Common myeloid progenitor, CD34-positive (primary cell): ENCODE measurements at regions of chr2 and their contacts with region 1.

Region 1: DNA sequence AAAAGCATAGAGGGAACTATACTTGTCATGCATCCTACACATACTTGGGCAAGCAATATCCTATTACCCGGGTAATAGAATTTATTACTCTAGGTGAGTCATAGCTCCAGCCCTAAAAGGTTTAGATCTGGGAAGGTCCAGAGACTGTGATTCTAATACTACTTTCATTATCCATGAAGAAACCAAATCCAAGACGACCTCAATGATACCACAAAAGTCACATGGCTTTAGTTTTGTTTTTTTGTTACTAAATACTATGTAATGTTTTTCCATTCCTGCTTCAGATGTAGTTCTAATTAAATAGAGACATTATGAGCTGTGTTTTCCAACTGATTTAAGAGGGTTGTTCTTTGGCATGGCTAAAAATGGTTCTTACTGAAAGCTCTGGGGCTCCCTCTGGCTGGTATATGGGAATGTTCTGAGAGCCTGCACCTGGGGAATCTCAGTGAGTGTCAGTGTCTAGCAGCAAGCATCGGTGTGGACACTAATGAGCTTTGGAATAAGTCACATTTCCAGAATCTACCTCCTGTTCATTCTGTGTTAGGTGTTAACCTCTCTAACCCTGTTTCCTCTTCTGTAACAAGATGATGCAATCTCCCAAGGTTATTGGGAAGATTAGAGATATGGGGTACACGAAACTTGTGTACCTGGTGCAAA is 20.5 kb upstream of the IL1RL2 start:
- DNase-seq: peak; percentile 29 to 57 (median 52)
- H3K4me3 ChIP-seq: no peak overlapping the region
- H3K27ac ChIP-seq: no peak overlapping the region
- H3K4me1 ChIP-seq: no peaks in the 10 kb centered on the region
- H3K27me3 ChIP-seq: no peaks in the 10 kb centered on the region

Region 2: GRCh38 chr2:102005989-102006885 is 160.1 kb before region 1 on chr2:
- CTCF ChIA-PET with region 1: interaction called, 18 read pairs
- POLR2A ChIA-PET with region 1: no interaction called
- DNase-seq: peak; percentile 68 to 84 (median 76)
- H3K4me3 ChIP-seq: no peak overlapping the region
- H3K27ac ChIP-seq: no peak overlapping the region
- H3K4me1 ChIP-seq: peaks cover 0 to 17% (median 10%) of the 10 kb centered on the region in 4 experiments
- H3K27me3 ChIP-seq: no peaks in the 10 kb centered on the region

Region 3: DNA sequence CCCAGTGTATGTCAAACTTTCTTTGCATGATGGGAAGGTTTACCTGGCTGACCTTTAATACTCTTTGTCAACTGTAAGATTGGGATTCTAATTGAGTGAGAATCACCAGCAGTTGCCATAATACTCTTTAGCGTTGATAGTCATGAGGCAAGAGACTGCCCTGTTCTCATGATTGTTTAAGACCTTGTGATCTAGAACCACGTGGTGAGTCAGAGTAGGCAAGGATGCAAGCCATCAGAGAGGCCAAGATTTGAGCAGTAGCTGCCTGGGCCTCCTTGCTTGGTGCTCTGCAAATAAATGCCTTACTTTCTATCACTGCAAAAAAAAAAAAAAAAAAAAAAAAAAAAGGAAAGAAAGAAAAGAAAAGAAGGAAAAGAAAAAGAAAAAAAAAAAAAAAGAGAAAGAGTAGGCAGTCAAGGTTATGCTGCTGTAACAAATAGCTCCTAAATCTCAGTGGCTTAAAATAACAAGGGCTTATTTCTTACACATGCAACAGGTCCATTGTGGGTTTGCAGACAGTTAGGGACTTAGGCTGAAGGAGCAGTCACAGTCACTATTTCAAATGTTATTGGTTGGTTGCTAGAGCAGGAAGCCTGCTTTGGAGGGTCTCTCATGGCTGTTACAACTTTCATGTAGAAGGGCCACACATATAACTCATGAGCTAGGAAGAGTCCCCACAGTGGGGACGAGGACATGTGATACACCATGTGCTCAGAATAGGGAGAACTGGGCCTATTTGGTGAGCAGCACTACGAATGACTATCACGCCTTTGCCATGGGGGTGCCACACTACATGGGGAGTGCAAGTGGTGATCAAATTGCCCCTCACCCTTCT is 152.9 kb before region 1 on chr2:
- CTCF ChIA-PET with region 1: interaction called, 10 read pairs
- POLR2A ChIA-PET with region 1: no interaction called
- DNase-seq: peak in 1 of 3 donors; percentile 33
- H3K4me3 ChIP-seq: no peak overlapping the region
- H3K27ac ChIP-seq: no peak overlapping the region
- H3K4me1 ChIP-seq: peaks cover 0 to 15% (median 11%) of the 10 kb centered on the region in 4 experiments
- H3K27me3 ChIP-seq: no peaks in the 10 kb centered on the region

Region 4: GRCh38 chr2:102020596-102021181 is 145.6 kb before region 1 on chr2:
- CTCF ChIA-PET with region 1: interaction called, 40 read pairs
- POLR2A ChIA-PET with region 1: no interaction called
- DNase-seq: peak; percentile 74 to 84 (median 80)
- H3K4me3 ChIP-seq: no peak overlapping the region
- H3K27ac ChIP-seq: no peak overlapping the region
- H3K4me1 ChIP-seq: peaks cover 0 to 4% (median 1%) of the 10 kb centered on the region in 4 experiments
- H3K27me3 ChIP-seq: no peaks in the 10 kb centered on the region

Region 5: GRCh38 chr2:102141970-102142828 is 24.1 kb before region 1 on chr2 and contains the start of gene IL1R1:
- CTCF ChIA-PET with region 1: interaction called, 10 read pairs
- POLR2A ChIA-PET with region 1: no interaction called
- DNase-seq: peak in 2 of 3 donors; percentile 12 to 26
- H3K4me3 ChIP-seq: peak within 1 kb of the TSS; percentile 22 to 69 (median 55)
- H3K27ac ChIP-seq: no peak within 1 kb of the TSS
- H3K4me1 ChIP-seq: peaks cover 13 to 49% (median 33%) of the 10 kb centered on the region in 4 experiments
- H3K27me3 ChIP-seq: peaks cover 0 to 25% (median 6%) of the 10 kb centered on the region in 5 experiments

Region 6: GRCh38 chr2:102155642-102156491 is 10.4 kb before region 1 on chr2:
- CTCF ChIA-PET with region 1: interaction called, 17 read pairs
- POLR2A ChIA-PET with region 1: no interaction called
- DNase-seq: peak in 2 of 3 donors; percentile 10 to 24
- H3K4me3 ChIP-seq: no peak overlapping the region
- H3K27ac ChIP-seq: no peak overlapping the region
- H3K4me1 ChIP-seq: no peaks in the 10 kb centered on the region
- H3K27me3 ChIP-seq: no peaks in the 10 kb centered on the region

Region 7: GRCh38 chr2:102717308-102718018 is 551.1 kb after region 1 on chr2:
- CTCF ChIA-PET with region 1: no interaction called
- POLR2A ChIA-PET with region 1: no interaction called
- DNase-seq: no peak
- H3K4me3 ChIP-seq: no peak overlapping the region
- H3K27ac ChIP-seq: no peak overlapping the region
- H3K4me1 ChIP-seq: no peaks in the 10 kb centered on the region
- H3K27me3 ChIP-seq: no peaks in the 10 kb centered on the region